Thyroid gland (tissue), 4 donors: ENCODE measurements at regions of chr1 and their contacts with region 1.

Region 1: DNA sequence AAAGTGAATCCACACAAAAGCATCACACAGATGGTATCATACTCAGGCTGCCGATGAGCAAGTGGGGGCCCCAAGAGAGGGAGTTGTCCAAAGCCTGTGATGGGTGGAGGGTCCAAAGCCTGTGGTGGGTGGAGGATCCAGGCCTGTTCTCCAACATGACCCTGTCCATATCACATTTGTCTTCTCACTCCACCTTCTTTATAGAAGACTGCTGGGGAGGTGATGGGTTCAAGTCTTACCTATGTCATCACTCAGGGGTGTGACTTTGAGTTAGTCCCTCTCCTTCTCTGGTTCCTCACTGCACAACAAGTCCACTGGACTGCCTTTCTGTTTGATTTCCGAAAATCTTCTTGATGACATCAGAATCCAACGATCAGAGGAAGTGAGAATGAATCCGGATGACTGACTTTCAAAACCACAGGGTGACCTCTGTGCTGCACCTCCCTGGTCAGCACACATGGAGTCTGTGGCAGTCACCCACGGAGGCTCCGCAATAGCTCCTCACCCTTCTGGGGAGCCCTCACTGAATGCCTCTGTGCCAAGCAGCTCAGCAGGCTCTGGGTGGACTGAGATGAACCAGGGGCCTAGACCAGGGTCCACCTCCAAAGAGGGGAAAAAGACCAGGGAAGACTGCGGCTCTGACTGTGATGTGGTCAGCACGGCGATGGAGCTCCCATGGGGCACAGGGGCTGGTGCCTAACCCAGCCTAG is 166.8 kb downstream of the HIVEP3 start:
- DNase-seq: no peak
- H3K4me3 ChIP-seq: no peak overlapping the region
- H3K27ac ChIP-seq: no peak overlapping the region
- H3K4me1 ChIP-seq: no peaks in the 10 kb centered on the region
- H3K27me3 ChIP-seq: no peaks in the 10 kb centered on the region
- CTCF ChIP-seq: no peak
- POLR2A ChIP-seq: no peak

Region 2: DNA sequence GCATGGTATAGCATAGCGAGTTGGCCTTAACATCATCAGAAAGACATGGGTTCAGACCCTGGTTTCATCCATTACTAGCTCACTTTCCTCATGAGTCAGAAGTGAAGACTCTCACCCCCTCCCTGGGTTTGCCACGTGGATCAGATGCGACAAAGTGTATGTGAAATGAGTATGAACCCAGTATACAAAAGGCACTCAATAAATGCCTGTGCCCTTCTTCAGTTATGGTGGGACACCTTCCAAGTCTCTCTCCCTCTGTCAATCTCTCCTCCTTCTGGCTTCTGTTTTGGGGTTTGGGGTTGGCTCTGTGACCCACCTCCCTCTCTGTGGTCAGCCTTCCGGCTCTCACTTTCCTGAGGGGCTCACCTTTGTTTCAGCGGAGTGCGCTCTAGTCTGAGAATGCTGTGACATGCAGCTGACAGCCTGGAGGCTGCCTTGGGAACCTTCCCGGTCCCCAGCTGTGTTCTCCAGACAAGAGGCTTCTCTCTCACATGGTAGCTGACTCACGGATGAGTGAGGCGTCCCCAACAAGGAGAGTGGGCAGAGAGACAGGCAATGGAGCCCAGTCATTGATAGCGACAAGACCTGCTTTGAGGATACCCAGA is 112.5 kb before region 1 on chr1:
- intact Hi-C with region 1: loop called (anchors 5 kb)
- DNase-seq: no peak
- H3K4me3 ChIP-seq: no peak overlapping the region
- H3K27ac ChIP-seq: no peak overlapping the region
- H3K4me1 ChIP-seq: no peaks in the 10 kb centered on the region
- H3K27me3 ChIP-seq: no peaks in the 10 kb centered on the region
- CTCF ChIP-seq: no peak
- POLR2A ChIP-seq: no peak